Activated CD4-positive, alpha-beta T cell treated with anti-CD3 and anti-CD28 coated beads, Interleukin-2, amount 10 ng/mL, durations not matched to agents 24 days and 14 days (primary cell): ENCODE measurements at regions of chr1 and their contacts with region 1.

Region 1: GRCh38 chr1:174883409-174883808 is 116.3 kb upstream of the CACYBP start:
- DNase-seq: peak; percentile 59
- H3K4me3 Mint-ChIP-seq: no peak overlapping the region
- H3K27ac Mint-ChIP-seq: no peak overlapping the region
- H3K4me1 Mint-ChIP-seq: no peaks in the 10 kb centered on the region
- H3K27me3 Mint-ChIP-seq: no peaks in the 10 kb centered on the region

Region 2: GRCh38 chr1:174982971-174983689 is 99.7 kb after region 1 on chr1:
- intact Hi-C with region 1: loop called (anchors 5 kb)
- DNase-seq: peak; percentile 88
- H3K4me3 Mint-ChIP-seq: no peak overlapping the region
- H3K27ac Mint-ChIP-seq: no peak overlapping the region
- H3K4me1 Mint-ChIP-seq: peaks cover 16% of the 10 kb centered on the region
- H3K27me3 Mint-ChIP-seq: no peaks in the 10 kb centered on the region